CD4-positive, alpha-beta T cell (primary cell): ENCODE measurements at regions of chr6 and their contacts with region 1.

Region 1: GRCh38 chr6:133741375-133741861 is 147.5 kb upstream of the TCF21 start:
- DNase-seq: no peak
- ATAC-seq: no peak
- H3K4me3 ChIP-seq: no peak overlapping the region
- H3K4me3 Mint-ChIP-seq: no peak overlapping the region
- H3K27ac ChIP-seq: no peak overlapping the region
- H3K27ac Mint-ChIP-seq: no peak overlapping the region
- H3K4me1 ChIP-seq: no peaks in the 10 kb centered on the region
- H3K4me1 Mint-ChIP-seq: no peaks in the 10 kb centered on the region
- H3K27me3 ChIP-seq: no peaks in the 10 kb centered on the region
- H3K27me3 Mint-ChIP-seq: no peaks in the 10 kb centered on the region
- CTCF ChIP-seq: no peak

Region 2: GRCh38 chr6:133631421-133631820 is 110.0 kb before region 1 on chr6:
- CTCF ChIA-PET with region 1: no interaction called
- POLR2A ChIA-PET with region 1: no interaction called
- intact Hi-C with region 1: no loop called
- DNase-seq: no peak
- ATAC-seq: no peak
- H3K4me3 ChIP-seq: no peak overlapping the region
- H3K4me3 Mint-ChIP-seq: no peak overlapping the region
- H3K27ac ChIP-seq: no peak overlapping the region
- H3K27ac Mint-ChIP-seq: no peak overlapping the region
- H3K4me1 ChIP-seq: no peaks in the 10 kb centered on the region
- H3K4me1 Mint-ChIP-seq: no peaks in the 10 kb centered on the region
- H3K27me3 ChIP-seq: no peaks in the 10 kb centered on the region
- H3K27me3 Mint-ChIP-seq: no peaks in the 10 kb centered on the region
- CTCF ChIP-seq: no peak

Region 3: DNA sequence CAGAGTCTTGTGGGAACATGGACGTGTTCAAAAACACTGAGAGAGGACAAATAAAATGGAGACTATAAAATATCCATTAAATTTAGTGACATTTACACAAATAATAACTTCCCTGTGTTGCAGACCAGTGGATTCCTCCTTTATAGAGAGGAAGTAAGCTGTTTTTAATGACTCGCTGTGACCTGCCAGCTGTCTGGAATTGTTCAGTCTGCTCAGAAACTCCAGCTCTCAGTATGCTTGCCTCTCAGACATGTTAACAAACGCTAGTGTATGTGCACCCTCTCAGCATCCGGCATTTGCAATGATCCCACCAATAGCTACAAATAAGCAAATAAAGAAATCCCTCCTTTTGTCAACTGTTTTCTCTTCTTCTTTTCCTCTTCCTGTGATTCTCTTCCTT is 10.5 kb before region 1 on chr6:
- CTCF ChIA-PET with region 1: no interaction called
- POLR2A ChIA-PET with region 1: no interaction called
- intact Hi-C with region 1: loop called in 1 of 2 experiments (anchors 1 kb)
- DNase-seq: no peak
- ATAC-seq: no peak
- H3K4me3 ChIP-seq: no peak overlapping the region
- H3K4me3 Mint-ChIP-seq: no peak overlapping the region
- H3K27ac ChIP-seq: no peak overlapping the region
- H3K27ac Mint-ChIP-seq: no peak overlapping the region
- H3K4me1 ChIP-seq: no peaks in the 10 kb centered on the region
- H3K4me1 Mint-ChIP-seq: no peaks in the 10 kb centered on the region
- H3K27me3 ChIP-seq: no peaks in the 10 kb centered on the region
- H3K27me3 Mint-ChIP-seq: no peaks in the 10 kb centered on the region
- CTCF ChIP-seq: no peak

Region 4: DNA sequence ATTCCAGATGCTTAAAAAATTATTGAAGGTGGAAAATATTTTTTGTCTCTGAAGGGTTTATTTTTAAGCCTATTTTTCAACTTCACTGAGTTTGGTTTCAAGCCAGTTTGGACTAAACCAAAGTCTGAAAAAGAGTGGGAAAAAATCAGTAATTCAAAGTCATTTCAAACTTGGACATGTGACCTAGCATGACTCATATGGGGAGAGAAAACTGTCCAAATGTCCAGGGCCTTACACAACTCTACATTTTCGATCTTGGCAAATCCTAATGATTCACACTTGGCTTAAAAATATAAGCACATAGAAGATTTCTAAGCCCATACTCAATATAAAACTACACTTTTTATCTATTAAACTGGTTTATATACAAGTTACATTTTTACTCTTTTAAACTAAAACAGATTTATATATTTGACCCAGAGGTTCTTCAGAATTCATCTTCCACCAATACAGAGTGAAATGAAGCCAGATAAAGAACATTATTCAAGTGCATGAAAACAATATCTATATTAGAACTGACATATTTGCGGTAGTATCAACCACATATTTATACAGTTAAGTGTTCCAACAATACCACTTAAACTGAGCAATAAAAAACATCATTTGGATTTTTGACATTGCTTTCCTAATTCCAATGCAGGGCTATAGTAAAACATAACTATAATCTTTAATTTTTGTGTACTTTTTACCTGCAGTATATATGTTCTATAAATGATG is 37.2 kb after region 1 on chr6:
- CTCF ChIA-PET with region 1: no interaction called
- POLR2A ChIA-PET with region 1: no interaction called
- intact Hi-C with region 1: no loop called
- DNase-seq: no peak
- ATAC-seq: no peak
- H3K4me3 ChIP-seq: no peak overlapping the region
- H3K4me3 Mint-ChIP-seq: no peak overlapping the region
- H3K27ac ChIP-seq: no peak overlapping the region
- H3K27ac Mint-ChIP-seq: no peak overlapping the region
- H3K4me1 ChIP-seq: no peaks in the 10 kb centered on the region
- H3K4me1 Mint-ChIP-seq: no peaks in the 10 kb centered on the region
- H3K27me3 ChIP-seq: no peaks in the 10 kb centered on the region
- H3K27me3 Mint-ChIP-seq: no peaks in the 10 kb centered on the region
- CTCF ChIP-seq: no peak